ENCODE measurements at regions of chr17 and their contacts with region 1.

Region 1: DNA sequence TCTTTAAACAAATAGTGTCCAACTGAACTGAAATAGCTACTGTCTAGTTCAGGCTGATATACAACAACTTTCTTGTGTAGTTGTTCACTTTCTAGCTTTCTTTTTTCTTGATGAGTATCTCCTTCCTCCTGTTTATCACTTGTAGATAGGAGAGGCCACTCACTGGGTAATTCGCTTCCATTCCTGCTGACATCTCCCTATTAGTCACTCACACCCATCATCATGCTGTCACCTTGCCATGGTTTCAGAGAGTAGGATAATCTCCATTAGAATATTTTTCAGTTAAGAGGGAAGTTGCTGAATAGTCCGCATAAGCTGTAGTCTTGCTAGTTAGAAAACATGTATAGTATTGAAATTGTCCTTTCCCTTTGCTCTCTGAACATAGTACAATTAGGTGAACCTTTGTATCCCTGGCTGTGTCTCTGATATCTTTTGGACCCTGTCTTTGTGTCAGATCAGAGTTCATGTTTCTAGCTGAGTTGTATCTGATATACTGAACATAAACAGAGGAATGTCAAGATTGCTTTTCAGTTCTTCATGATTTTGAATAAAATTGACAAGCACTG is 64.4 kb upstream of the RASL10B start:
- DNase-seq: no peak
- H3K4me3 ChIP-seq: no peak overlapping the region
- H3K27ac ChIP-seq: no peak overlapping the region
- H3K27me3 ChIP-seq: no peaks in the 10 kb centered on the region
- CTCF ChIP-seq: no peak

Region 2: GRCh38 chr17:35605678-35606077 is 61.4 kb before region 1 on chr17:
- intact Hi-C with region 1: loop called in 1 of 2 experiments (anchors 10 kb)
- DNase-seq: no peak
- H3K4me3 ChIP-seq: no peak overlapping the region
- H3K27ac ChIP-seq: peak overlapping the region in 19 of 59 donors; percentile 4 to 70 (median 44)
- H3K27me3 ChIP-seq: no peaks in the 10 kb centered on the region
- CTCF ChIP-seq: no peak

Region 3: GRCh38 chr17:35731239-35731931 is 64.3 kb after region 1 on chr17 and contains the start of gene RASL10B:
- intact Hi-C with region 1: loop called in 1 of 2 experiments (anchors 10 kb)
- DNase-seq: peak; percentile 50 to 82 (median 72)
- H3K4me3 ChIP-seq: peak within 1 kb of the TSS; percentile 48 to 83 (median 69)
- H3K27ac ChIP-seq: peak within 1 kb of the TSS in 37 of 59 donors; percentile 6 to 79 (median 46)
- H3K27me3 ChIP-seq: no peaks in the 10 kb centered on the region
- CTCF ChIP-seq: no peak
- total RNA-seq, gene RASL10B: 9.0 to 65.6 (median 36.0) TPM